Activated CD8-positive, alpha-beta memory T cell treated with anti-CD3 and anti-CD28 coated beads, Interleukin-2, amount 10 ng/mL, durations not matched to agents 7 days and 5 days (primary cell): ENCODE measurements at regions of chr9 and their contacts with region 1.

Region 1: GRCh38 chr9:133992780-133993634 is 883 bp upstream of the VAV2 start:
- DNase-seq: peak; percentile 77
- ATAC-seq: peak; percentile 81
- H3K4me3 Mint-ChIP-seq: peak overlapping the region; percentile 45
- H3K27ac Mint-ChIP-seq: no peak overlapping the region
- H3K4me1 Mint-ChIP-seq: peaks cover 2% of the 10 kb centered on the region
- H3K27me3 Mint-ChIP-seq: peaks cover 15% of the 10 kb centered on the region

Region 2: GRCh38 chr9:133742849-133743444 is 250.1 kb before region 1 on chr9:
- CTCF ChIA-PET with region 1: interaction called, 16 read pairs
- DNase-seq: peak; percentile 80
- ATAC-seq: peak; percentile 75
- H3K4me3 Mint-ChIP-seq: no peak overlapping the region
- H3K27ac Mint-ChIP-seq: no peak overlapping the region
- H3K4me1 Mint-ChIP-seq: no peaks in the 10 kb centered on the region
- H3K27me3 Mint-ChIP-seq: peaks cover 17% of the 10 kb centered on the region

Region 3: DNA sequence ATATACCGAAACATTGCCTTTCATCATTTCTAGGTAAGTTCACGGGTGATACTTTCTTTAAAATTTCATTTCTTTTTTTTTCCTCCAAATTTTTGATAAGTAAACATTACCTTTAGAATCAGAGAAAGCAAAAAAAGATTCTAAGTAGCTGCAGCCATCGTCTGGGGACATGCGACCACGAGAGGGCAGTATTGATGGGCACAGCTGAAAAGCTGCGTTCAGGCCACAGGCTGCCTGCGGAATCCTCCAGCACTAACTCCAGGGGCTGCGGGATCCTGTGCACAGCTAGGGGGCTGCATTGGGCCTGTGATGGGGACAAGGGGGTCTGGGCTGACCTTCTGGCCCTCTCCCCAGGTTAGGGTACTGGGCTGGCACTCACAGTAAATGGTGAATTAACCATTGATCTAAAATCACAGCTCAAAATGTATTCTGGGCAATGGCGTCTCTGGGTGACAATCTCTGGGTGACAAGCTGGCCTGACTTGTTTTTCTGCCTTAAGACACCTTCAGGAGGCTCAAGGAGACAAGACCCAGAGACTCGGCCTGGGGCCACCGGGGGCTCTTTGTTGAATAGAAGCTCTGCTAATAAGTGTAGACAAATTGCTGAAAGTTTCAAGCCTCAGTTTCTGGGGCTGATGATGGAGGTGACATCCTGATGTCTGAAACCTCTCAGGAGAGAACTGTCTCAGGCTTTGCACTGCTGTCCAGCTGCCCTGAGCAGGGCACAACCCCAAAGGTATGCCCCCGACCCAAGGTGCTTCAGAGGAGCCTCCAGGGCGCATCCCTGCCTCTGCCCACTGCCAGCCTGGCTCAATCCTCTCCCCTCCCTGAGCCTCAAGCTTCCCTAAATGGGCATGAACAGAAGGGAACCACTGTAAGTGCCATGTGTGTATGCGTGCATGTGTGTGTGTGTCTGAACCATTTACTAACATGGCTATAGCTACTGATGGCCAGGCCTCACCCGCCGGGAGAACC is 210.6 kb before region 1 on chr9:
- CTCF ChIA-PET with region 1: interaction called, 109 read pairs
- DNase-seq: peak; percentile 75
- ATAC-seq: peak; percentile 66
- H3K4me3 Mint-ChIP-seq: no peak overlapping the region
- H3K27ac Mint-ChIP-seq: no peak overlapping the region
- H3K4me1 Mint-ChIP-seq: peaks cover 13% of the 10 kb centered on the region
- H3K27me3 Mint-ChIP-seq: no peaks in the 10 kb centered on the region

Region 4: DNA sequence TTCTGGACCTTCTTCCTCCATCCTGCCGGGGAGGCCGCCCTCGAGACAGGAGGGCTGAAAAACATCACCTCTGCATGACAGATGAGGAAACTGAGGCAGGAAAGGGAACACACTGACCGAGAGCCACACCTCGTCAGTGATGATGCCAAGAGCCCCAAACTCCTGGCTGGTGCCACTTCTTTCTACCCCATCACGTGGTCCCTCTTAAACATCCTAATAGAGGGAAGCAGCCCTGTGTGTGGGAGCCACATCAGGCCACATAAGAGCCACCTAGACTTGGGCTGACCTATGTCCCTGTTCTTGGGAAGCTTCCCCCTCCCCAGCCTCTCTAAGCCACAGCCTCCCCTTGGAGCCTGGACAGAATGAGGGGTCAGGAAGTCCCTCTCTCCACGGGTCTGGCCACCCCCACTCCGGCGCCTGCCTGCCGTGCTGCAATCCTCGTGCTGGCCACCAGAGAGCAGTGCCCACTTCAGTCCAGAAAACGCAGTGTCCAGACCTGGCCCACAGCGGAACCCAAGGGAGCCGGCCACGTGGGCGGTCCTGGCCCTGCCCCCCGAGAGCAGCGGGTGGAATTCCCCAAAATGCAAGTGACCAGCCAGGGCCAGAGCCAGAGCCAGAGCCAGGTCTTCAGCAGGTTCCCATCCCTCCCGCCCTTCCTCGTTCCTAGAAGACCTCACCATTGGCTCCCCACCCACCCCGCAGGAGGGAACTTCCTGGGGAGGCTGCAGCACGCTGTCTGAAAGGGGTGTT is 200.1 kb before region 1 on chr9:
- CTCF ChIA-PET with region 1: interaction called, 62 read pairs
- DNase-seq: peak; percentile 61
- ATAC-seq: peak; percentile 74
- H3K4me3 Mint-ChIP-seq: no peak overlapping the region
- H3K27ac Mint-ChIP-seq: no peak overlapping the region
- H3K4me1 Mint-ChIP-seq: peaks cover 3% of the 10 kb centered on the region
- H3K27me3 Mint-ChIP-seq: no peaks in the 10 kb centered on the region

Region 5: GRCh38 chr9:134024828-134025605 is 32.0 kb after region 1 on chr9 and contains the start of gene BRD3OS:
- CTCF ChIA-PET with region 1: interaction called, 12 read pairs
- DNase-seq: peak; percentile 96
- ATAC-seq: peak; percentile 92
- H3K4me3 Mint-ChIP-seq: peak within 1 kb of the TSS; percentile 75
- H3K27ac Mint-ChIP-seq: peak within 1 kb of the TSS; percentile 68
- H3K4me1 Mint-ChIP-seq: peaks cover 7% of the 10 kb centered on the region
- H3K27me3 Mint-ChIP-seq: peaks cover 2% of the 10 kb centered on the region
- total RNA-seq, gene BRD3OS: 12.5 to 14.5 TPM